ENCODE measurements at regions of chr2 and their contacts with region 1.

Region 1: DNA sequence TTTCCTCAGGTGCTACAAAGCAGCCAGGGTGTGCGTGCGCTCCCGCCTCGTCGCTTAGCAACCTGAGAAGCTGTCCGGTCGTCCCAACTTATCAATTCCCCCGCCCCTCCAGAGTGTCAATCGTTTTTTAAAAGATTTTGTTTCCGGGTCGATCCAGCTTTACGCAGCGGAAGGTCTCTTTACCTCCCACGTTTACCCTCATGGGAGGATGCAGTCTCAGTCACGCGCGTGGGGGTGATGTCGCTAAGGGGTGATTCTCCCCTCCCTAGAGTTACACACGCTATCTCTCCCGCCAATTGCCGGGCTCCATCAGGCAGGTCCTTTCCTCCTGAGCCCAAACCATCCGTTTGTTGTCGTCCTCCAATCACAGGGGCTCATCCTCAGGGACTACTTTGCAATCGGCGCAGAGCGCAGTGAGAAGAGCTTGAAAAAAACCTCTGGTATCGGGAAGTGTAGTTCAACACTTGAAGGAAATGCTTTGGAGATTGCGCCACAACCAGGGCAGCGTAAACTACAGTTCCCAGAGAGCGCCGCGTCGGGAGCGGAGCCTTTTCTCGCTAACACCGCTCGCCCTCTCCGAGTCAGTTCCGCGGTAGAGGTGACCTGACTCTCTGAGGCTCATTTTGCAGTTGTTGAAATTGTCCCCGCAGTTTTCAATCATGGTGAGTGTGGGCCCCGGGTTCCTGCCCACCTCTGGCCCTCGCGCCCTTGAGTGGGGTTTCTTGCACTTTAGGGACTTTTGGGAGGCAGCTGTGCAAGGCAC is at the starts of genes MDH1 and WDPCP:
- DNase-seq: peak; percentile 80 to 98 (median 84)
- ATAC-seq: peak; percentile 95
- H3K4me3 ChIP-seq: peak within 1 kb of the TSS; percentile 96
- H3K27ac ChIP-seq: peak within 1 kb of the TSS; percentile 90
- H3K4me1 ChIP-seq: peaks cover 0 to 14% of the 10 kb centered on the region in 2 experiments; a peak in 3 of 5 replicates
- H3K27me3 ChIP-seq: no peaks in the 10 kb centered on the region
- CTCF ChIP-seq: no peak; a peak in 1 of 6 replicates
- EP300 ChIP-seq: no peak
- POLR2A ChIP-seq: peak; percentile 88
- RAD21 ChIP-seq: no peak
- polyA plus RNA-seq, gene MDH1: 1,119 to 1,225 TPM
- polyA plus RNA-seq, gene WDPCP: 1.4 to 1.5 TPM

Region 2: GRCh38 chr2:63226297-63226696 is 362.3 kb before region 1 on chr2:
- CTCF ChIA-PET with region 1: no interaction called
- POLR2A ChIA-PET with region 1: no interaction called
- in situ Hi-C with region 1: no loop called
- intact Hi-C with region 1: no loop called
- DNase-seq: no peak
- ATAC-seq: no peak
- H3K4me3 ChIP-seq: no peak overlapping the region
- H3K27ac ChIP-seq: no peak overlapping the region
- H3K4me1 ChIP-seq: 0 out of 5 replicates have a peak, but pooled peaks cover 0 to 3% of the 10 kb centered on the region in 2 experiments
- H3K27me3 ChIP-seq: no peaks in the 10 kb centered on the region
- CTCF ChIP-seq: no peak
- EP300 ChIP-seq: no peak
- POLR2A ChIP-seq: no peak
- RAD21 ChIP-seq: no peak

Region 3: DNA sequence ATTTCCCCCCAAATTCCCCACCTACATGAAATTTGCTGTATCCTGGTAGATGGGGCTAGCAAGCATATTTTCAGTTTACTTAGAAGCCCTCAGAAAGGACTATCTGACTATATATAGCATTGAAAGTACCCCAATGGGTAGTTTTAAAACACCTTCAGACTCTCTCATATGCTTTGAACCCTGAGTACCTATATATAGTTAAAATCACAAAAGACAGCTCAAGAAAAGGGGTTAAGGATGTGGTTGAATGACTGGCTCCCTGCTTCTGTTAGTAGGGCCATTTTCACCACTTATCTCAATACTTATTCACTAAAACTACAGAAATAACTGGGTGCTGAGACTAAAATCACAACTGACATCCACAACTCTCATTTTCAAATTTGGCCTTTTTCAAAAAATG is 18.8 kb before region 1 on chr2:
- CTCF ChIA-PET with region 1: no interaction called
- POLR2A ChIA-PET with region 1: interaction called, 10 read pairs
- in situ Hi-C with region 1: no loop called
- intact Hi-C with region 1: no loop called
- DNase-seq: no peak
- ATAC-seq: no peak
- H3K4me3 ChIP-seq: no peak overlapping the region
- H3K27ac ChIP-seq: no peak overlapping the region
- H3K4me1 ChIP-seq: no peaks in the 10 kb centered on the region; a peak in 1 of 5 replicates
- H3K27me3 ChIP-seq: no peaks in the 10 kb centered on the region
- CTCF ChIP-seq: no peak
- EP300 ChIP-seq: no peak
- POLR2A ChIP-seq: no peak
- RAD21 ChIP-seq: no peak

Region 4: GRCh38 chr2:63598976-63599375 is 10.4 kb after region 1 on chr2:
- CTCF ChIA-PET with region 1: no interaction called
- POLR2A ChIA-PET with region 1: interaction called, 17 read pairs
- in situ Hi-C with region 1: no loop called
- intact Hi-C with region 1: no loop called
- DNase-seq: no peak
- ATAC-seq: no peak
- H3K4me3 ChIP-seq: no peak overlapping the region
- H3K27ac ChIP-seq: no peak overlapping the region
- H3K4me1 ChIP-seq: no peaks in the 10 kb centered on the region
- H3K27me3 ChIP-seq: no peaks in the 10 kb centered on the region
- CTCF ChIP-seq: no peak
- EP300 ChIP-seq: no peak
- POLR2A ChIP-seq: no peak
- RAD21 ChIP-seq: no peak

Region 5: DNA sequence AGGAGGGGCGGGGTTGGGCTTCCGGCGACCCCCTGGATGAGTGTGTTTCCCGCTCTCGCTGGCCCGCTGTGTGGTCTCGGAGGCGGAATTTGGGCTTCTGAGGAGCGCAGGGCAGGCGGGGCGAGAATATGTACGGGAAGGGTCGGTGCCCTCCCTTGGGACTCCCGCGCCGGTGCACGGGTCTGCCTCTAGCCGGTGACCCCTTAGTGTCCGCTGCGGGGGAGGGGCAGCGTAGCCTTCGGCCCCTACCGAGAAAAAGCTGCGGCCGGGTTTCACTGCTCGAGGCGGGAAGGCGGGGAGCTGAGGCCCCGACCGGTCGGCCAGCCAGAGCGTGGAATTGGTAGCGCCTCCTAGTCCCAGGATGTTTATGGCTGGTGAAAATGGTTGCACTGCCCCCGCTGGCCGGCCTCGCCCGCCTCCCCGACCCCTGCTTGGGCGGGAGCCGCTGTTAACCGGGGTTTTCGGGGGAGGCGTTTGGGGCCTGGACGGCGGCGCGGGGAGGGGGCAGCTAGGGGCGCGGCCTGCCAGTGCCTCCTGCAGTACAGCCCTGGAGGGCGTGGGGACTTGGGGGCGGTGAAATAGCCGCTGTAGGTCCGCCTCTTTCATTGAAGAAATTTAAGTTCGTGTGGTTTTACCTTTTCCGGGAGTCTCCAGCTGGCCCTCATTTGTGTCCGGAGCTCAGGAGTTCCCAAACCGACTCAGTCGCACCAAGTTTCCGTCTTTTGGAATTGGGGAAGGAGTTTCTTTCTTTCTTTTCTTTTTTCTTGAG is 252.9 kb after region 1 on chr2 and contains the start of gene UGP2:
- CTCF ChIA-PET with region 1: no interaction called
- POLR2A ChIA-PET with region 1: interaction called, 4 read pairs
- in situ Hi-C with region 1: no loop called
- intact Hi-C with region 1: loop called (anchors 10 kb)
- DNase-seq: peak; percentile 81 to 93 (median 84)
- ATAC-seq: peak; percentile 89
- H3K4me3 ChIP-seq: peak within 1 kb of the TSS; percentile 80
- H3K27ac ChIP-seq: peak within 1 kb of the TSS; percentile 96
- H3K4me1 ChIP-seq: peaks cover 10 to 18% of the 10 kb centered on the region in 2 experiments
- H3K27me3 ChIP-seq: no peaks in the 10 kb centered on the region
- CTCF ChIP-seq: peak in 2 of 3 experiments; percentile 10 to 36; a peak in 3 of 6 replicates
- EP300 ChIP-seq: no peak
- POLR2A ChIP-seq: peak; percentile 75
- RAD21 ChIP-seq: 0 out of 4 replicates have a peak, but pooled peaks of 1 of the 2 experiments have one; percentile 13
- polyA plus RNA-seq, gene UGP2: 58.9 to 59.6 TPM

Measured in K562 (cell line).